CD4-positive, alpha-beta T cell (primary cell): ENCODE measurements at regions of chr5 and their contacts with region 1.

Region 1: GRCh38 chr5:72895758-72896157 is 60.1 kb upstream of the FCHO2 start:
- DNase-seq: peak in 1 of 14 experiments; percentile 1
- ATAC-seq: no peak
- H3K4me3 ChIP-seq: no peak overlapping the region
- H3K4me3 Mint-ChIP-seq: no peak overlapping the region
- H3K27ac ChIP-seq: no peak overlapping the region
- H3K27ac Mint-ChIP-seq: no peak overlapping the region
- H3K4me1 ChIP-seq: no peaks in the 10 kb centered on the region
- H3K4me1 Mint-ChIP-seq: no peaks in the 10 kb centered on the region
- H3K27me3 ChIP-seq: no peaks in the 10 kb centered on the region
- H3K27me3 Mint-ChIP-seq: no peaks in the 10 kb centered on the region
- CTCF ChIP-seq: no peak

Region 2: GRCh38 chr5:72871366-72872024 is 24.3 kb before region 1 on chr5:
- CTCF ChIA-PET with region 1: no interaction called
- POLR2A ChIA-PET with region 1: no interaction called
- intact Hi-C with region 1: no loop called
- DNase-seq: no peak
- ATAC-seq: no peak
- H3K4me3 ChIP-seq: no peak overlapping the region
- H3K4me3 Mint-ChIP-seq: no peak overlapping the region
- H3K27ac ChIP-seq: no peak overlapping the region
- H3K27ac Mint-ChIP-seq: no peak overlapping the region
- H3K4me1 ChIP-seq: no peaks in the 10 kb centered on the region
- H3K4me1 Mint-ChIP-seq: peaks cover 30% of the 10 kb centered on the region
- H3K27me3 ChIP-seq: no peaks in the 10 kb centered on the region
- H3K27me3 Mint-ChIP-seq: no peaks in the 10 kb centered on the region
- CTCF ChIP-seq: no peak

Region 3: DNA sequence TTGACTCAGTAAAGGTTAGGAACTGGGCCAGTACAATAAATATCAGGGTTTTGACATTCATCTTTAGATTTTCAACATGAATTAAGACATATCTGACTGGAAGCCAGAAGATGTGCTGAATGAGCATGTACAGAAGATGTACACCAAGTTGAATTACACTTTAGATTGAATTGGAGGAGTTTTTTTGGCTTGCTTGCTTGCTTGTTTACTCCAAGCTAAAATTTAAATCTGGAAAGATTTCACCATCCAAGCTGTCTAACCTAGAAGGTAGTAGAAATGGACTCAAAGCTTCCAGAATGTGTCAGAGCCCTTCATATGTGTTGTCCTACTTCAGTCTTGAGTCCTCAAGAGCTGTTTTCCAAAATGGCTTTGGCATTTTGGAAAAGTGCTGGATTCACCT is 11.0 kb after region 1 on chr5:
- CTCF ChIA-PET with region 1: no interaction called
- POLR2A ChIA-PET with region 1: no interaction called
- intact Hi-C with region 1: loop called in 1 of 2 experiments (anchors 2 kb)
- DNase-seq: no peak
- ATAC-seq: no peak
- H3K4me3 ChIP-seq: no peak overlapping the region
- H3K4me3 Mint-ChIP-seq: no peak overlapping the region
- H3K27ac ChIP-seq: no peak overlapping the region
- H3K27ac Mint-ChIP-seq: no peak overlapping the region
- H3K4me1 ChIP-seq: no peaks in the 10 kb centered on the region
- H3K4me1 Mint-ChIP-seq: no peaks in the 10 kb centered on the region
- H3K27me3 ChIP-seq: no peaks in the 10 kb centered on the region
- H3K27me3 Mint-ChIP-seq: no peaks in the 10 kb centered on the region
- CTCF ChIP-seq: no peak